Heart left ventricle (tissue), 16 donors: ENCODE measurements at regions of chr7 and their contacts with region 1.

Region 1: DNA sequence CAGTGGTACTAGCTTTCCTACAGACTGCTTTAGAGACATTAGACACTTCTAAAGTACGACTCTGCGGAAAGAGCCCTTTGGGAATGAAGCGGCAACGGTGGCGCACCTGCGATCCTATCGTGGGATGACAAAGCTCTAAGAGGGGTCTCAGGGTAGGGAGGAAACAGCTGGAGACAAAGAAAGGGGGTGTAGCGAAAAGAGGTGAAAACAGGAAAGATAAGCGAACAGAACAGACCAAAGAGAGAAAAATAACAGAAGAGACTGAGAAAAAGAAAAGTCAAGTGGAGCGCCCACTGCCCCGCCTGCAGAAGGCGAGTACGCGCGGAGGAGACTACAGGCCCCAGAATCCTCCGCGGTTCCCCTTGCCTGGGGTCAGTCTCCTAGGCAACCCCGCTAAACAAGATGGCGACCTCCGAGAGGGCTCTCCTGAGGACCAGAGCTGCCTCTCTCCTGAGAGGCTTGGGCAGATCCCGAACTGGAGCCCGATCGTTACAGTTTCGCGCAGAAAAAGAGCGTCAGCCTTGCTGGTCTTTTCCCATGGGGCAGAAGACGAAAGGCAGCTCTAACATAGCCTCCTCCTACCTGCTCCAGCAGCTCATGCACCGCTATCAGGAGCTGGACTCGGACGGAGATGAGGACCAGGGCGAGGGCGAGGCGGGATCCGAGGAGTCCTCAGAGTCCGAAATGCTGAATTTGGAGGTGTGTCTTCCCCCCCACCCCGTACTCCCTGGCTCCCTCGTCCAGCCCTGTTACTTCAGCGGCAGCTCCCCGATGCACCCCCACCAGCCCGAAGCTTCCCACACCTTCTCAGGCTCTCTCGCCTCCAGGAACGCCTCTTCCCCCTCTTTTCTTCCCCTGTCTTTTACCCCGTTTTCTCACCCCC is at the start of gene LRGUK:
- DNase-seq: peak; percentile 86 to 92 (median 88)
- ATAC-seq: peak; percentile 99 to 100 (median 100)
- H3K4me3 ChIP-seq: peak within 1 kb of the TSS; percentile 44 to 80 (median 66)
- H3K27ac ChIP-seq: no peak within 1 kb of the TSS
- H3K4me1 ChIP-seq: peaks cover 0 to 11% (median 0%) of the 10 kb centered on the region in 12 donors
- H3K27me3 ChIP-seq: peaks cover 0 to 5% (median 0%) of the 10 kb centered on the region in 9 donors
- CTCF ChIP-seq: no peak
- POLR2A ChIP-seq: peak in 1 of 2 donors; percentile 21
- total RNA-seq, gene LRGUK: 0.12 to 0.51 (median 0.28) TPM in 7 of 9 donors, not detected in the others

Region 2: GRCh38 chr7:133252858-133253518 is 874.2 kb before region 1 on chr7 and contains the start of gene EXOC4:
- intact Hi-C with region 1: loop called in 1 of 10 experiments (anchors 5 kb)
- DNase-seq: peak; percentile 87 to 95 (median 93)
- ATAC-seq: peak; percentile 100
- H3K4me3 ChIP-seq: peak within 1 kb of the TSS; percentile 57 to 96 (median 90)
- H3K27ac ChIP-seq: peak within 1 kb of the TSS in 11 of 12 donors; percentile 59 to 90 (median 86)
- H3K4me1 ChIP-seq: peaks cover 0 to 35% (median 9%) of the 10 kb centered on the region in 12 donors
- H3K27me3 ChIP-seq: no peaks in the 10 kb centered on the region
- CTCF ChIP-seq: no peak
- POLR2A ChIP-seq: peak in 1 of 2 donors; percentile 60
- total RNA-seq, gene EXOC4: 26.1 to 61.2 (median 35.2) TPM

Region 3: GRCh38 chr7:134084488-134085144 is 42.6 kb before region 1 on chr7:
- intact Hi-C with region 1: no loop called
- DNase-seq: no peak
- ATAC-seq: peak in 2 of 4 donors; percentile 34 to 53
- H3K4me3 ChIP-seq: no peak overlapping the region
- H3K27ac ChIP-seq: peak overlapping the region in 1 of 12 donors; percentile 18
- H3K4me1 ChIP-seq: peaks cover 0 to 16% (median 0%) of the 10 kb centered on the region in 12 donors
- H3K27me3 ChIP-seq: no peaks in the 10 kb centered on the region
- CTCF ChIP-seq: no peak
- POLR2A ChIP-seq: no peak

Region 4: GRCh38 chr7:134316539-134317344 is 189.5 kb after region 1 on chr7 and contains the start of gene SLC35B4:
- intact Hi-C with region 1: loop called in 1 of 10 experiments (anchors 5 kb)
- DNase-seq: peak; percentile 96 to 98 (median 98)
- ATAC-seq: peak; percentile 99 to 100 (median 100)
- H3K4me3 ChIP-seq: peak within 1 kb of the TSS; percentile 66 to 100 (median 83)
- H3K27ac ChIP-seq: peak within 1 kb of the TSS; percentile 13 to 88 (median 80)
- H3K4me1 ChIP-seq: peaks cover 0 to 15% (median 7%) of the 10 kb centered on the region in 12 donors
- H3K27me3 ChIP-seq: no peaks in the 10 kb centered on the region
- CTCF ChIP-seq: peak in 10 of 12 donors; percentile 8 to 52 (median 34)
- POLR2A ChIP-seq: peak in 1 of 2 donors; percentile 42
- total RNA-seq, gene SLC35B4: 3.8 to 8.6 (median 5.7) TPM

Region 5: DNA sequence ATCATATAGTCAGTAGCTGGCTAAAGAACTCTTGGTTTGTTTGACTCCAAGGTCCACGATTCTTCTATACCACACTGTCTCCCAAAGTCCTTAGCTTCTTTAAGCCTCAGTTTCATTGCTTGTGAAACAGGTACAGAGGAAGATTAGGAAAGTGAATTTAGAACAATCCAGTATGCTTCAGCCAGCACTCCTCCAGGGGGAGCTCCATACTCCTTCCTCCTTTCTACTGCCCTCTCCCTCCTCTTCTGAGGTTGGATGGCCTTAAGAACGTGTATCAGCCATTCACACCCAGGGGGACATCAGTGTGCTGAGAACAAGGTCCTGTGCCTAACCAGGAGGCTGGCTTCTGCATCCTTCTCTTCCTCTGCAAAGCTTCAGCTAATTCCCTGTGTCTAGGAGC is 597.4 kb after region 1 on chr7:
- intact Hi-C with region 1: no loop called
- DNase-seq: no peak
- ATAC-seq: peak in 1 of 4 donors; percentile 52
- H3K4me3 ChIP-seq: no peak overlapping the region
- H3K27ac ChIP-seq: peak overlapping the region in 3 of 12 donors; percentile 48 to 75 (median 64)
- H3K4me1 ChIP-seq: peaks cover 0 to 39% (median 7%) of the 10 kb centered on the region in 12 donors
- H3K27me3 ChIP-seq: no peaks in the 10 kb centered on the region
- CTCF ChIP-seq: peak in 10 of 12 donors; percentile 25 to 56 (median 36)
- POLR2A ChIP-seq: no peak